ENCODE measurements at regions of chr4 and their contacts with region 1.

Region 1: GRCh38 chr4:54228056-54228527 is 1.0 kb upstream of the PDGFRA start:
- DNase-seq: peak; percentile 90
- H3K4me3 ChIP-seq: peak overlapping the region; percentile 77 to 81
- H3K27ac ChIP-seq: peak overlapping the region; percentile 78
- H3K4me1 ChIP-seq: peaks cover 26% of the 10 kb centered on the region
- H3K27me3 ChIP-seq: no peaks in the 10 kb centered on the region
- CTCF ChIP-seq: peak; percentile 75 to 79 (median 79)
- POLR2A ChIP-seq: no peak

Region 2: GRCh38 chr4:53003959-53004358 is 1224.1 kb before region 1 on chr4:
- intact Hi-C with region 1: loop called (anchors 5 kb)
- DNase-seq: no peak
- H3K4me3 ChIP-seq: no peak overlapping the region
- H3K27ac ChIP-seq: no peak overlapping the region
- H3K4me1 ChIP-seq: peaks cover 48% of the 10 kb centered on the region
- H3K27me3 ChIP-seq: no peaks in the 10 kb centered on the region
- CTCF ChIP-seq: no peak
- POLR2A ChIP-seq: no peak

Region 3: DNA sequence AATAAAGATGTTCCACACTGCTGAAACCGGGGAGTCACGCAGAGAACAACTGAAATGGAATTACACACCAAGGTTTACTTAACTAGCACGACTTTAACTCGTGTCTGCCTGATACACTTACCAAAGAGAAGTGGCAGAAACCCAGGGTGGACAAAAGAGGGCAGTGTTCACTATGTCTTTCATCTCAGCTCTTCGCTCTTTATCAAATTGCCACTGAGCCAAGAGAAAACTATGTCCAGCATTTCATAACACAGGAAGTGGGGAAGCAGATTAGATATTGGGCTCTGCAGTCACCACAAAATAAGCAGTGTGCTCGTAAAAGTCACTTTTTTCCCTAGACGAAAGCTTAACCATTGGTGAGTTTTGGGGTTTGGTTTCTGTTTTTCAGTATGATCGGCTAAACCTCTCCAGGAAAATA is 319.4 kb before region 1 on chr4:
- intact Hi-C with region 1: loop called (anchors 10 kb)
- DNase-seq: peak; percentile 74
- H3K4me3 ChIP-seq: no peak overlapping the region
- H3K27ac ChIP-seq: peak overlapping the region in 1 of 2 donors; percentile 6
- H3K4me1 ChIP-seq: peaks cover 3% of the 10 kb centered on the region
- H3K27me3 ChIP-seq: no peaks in the 10 kb centered on the region
- CTCF ChIP-seq: peak; percentile 54 to 62 (median 59)
- POLR2A ChIP-seq: no peak

Region 4: DNA sequence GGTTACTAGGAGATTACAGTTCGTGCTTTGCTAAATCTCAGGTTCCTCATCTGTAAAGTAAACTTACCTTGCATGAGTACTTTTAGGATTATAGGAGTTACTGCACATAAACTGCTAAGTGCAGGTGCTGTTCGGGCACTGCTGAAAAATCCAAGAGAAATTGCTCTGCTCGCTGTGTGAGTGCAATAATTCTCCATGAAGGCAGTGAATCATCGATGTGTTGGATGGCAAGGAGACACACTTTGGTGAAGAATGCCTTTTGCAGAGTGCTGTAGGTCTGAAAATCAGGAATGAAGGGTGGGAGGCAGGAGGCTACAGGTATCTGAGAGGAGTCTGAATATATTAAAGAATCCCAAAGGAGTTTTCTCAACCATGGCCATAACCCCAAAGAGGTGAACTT is 276.7 kb before region 1 on chr4:
- intact Hi-C with region 1: no loop called
- DNase-seq: no peak
- H3K4me3 ChIP-seq: no peak overlapping the region
- H3K27ac ChIP-seq: no peak overlapping the region
- H3K4me1 ChIP-seq: no peaks in the 10 kb centered on the region
- H3K27me3 ChIP-seq: no peaks in the 10 kb centered on the region
- CTCF ChIP-seq: no peak
- POLR2A ChIP-seq: no peak

Region 5: DNA sequence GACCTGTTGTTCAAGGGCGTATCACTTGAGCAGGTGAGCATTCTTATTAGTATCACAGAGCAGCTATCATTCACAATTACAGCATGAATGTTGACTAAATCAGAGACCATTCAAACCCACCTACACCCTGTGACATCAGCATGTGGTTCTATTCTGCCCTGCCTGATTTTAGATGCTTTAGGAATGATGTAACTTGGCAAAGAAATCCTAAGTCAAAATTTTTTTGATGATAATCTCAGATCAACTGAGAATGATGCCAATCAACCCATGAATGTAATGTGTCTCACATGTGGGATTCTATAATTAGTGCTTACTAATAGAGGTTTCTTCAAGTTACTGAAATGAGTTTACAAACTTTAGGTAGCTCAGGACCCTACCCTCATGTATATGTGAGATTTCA is 150.3 kb before region 1 on chr4:
- intact Hi-C with region 1: no loop called
- DNase-seq: no peak
- H3K4me3 ChIP-seq: no peak overlapping the region
- H3K27ac ChIP-seq: no peak overlapping the region
- H3K4me1 ChIP-seq: peaks cover 3% of the 10 kb centered on the region
- H3K27me3 ChIP-seq: no peaks in the 10 kb centered on the region
- CTCF ChIP-seq: no peak
- POLR2A ChIP-seq: no peak

Region 6: DNA sequence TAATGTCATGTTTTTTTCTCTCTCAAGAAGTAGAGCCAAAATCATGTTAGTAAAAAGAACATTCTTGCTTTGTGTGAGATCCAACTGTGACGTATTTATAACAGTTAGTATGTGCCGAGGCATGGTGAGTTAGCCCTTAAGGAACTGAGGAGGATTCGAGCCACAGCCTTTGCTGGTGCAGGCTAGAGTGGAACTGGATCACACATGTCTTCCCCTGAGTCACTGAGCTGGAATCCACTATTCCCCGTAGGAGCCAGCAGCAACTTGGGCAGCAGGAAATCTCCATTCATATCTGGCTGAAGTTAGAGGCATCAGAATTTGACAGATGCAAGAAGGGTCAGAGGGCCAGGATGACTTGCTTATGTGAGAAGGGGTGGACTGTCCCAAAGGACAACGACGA is 285.1 kb after region 1 on chr4:
- intact Hi-C with region 1: no loop called
- DNase-seq: no peak
- H3K4me3 ChIP-seq: no peak overlapping the region
- H3K27ac ChIP-seq: no peak overlapping the region
- H3K4me1 ChIP-seq: no peaks in the 10 kb centered on the region
- H3K27me3 ChIP-seq: no peaks in the 10 kb centered on the region
- CTCF ChIP-seq: no peak
- POLR2A ChIP-seq: no peak